ENCODE measurements at regions of chr6 and their contacts with region 1.

Region 1: DNA sequence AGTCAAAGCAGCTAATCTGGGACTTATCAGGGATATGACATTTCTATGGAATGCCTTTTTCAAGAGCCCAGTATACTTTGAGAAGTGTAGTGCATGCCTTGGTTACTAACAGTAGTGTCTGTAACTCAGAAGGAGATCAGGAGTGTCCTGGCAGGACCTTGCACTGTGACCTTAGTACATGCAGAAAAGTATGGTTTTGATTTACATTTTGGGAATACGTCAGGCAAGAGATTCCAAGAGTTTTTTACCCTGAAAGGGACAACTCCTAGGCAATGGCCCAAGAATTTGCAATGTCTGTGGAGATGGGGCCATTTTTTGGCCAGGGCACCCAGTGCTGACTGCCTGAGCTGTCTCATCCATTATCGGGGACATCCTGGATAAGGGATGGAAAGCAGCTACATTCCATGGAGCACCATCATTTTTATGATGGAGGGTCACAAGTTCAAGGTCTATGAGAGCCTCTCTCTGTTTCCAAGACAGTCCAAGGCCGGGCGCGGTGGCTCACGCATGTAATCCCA is 80.2 kb downstream of the FAM50B start:
- DNase-seq: no peak
- H3K4me3 ChIP-seq: no peak overlapping the region
- H3K4me3 Mint-ChIP-seq: no peak overlapping the region
- H3K27ac ChIP-seq: no peak overlapping the region
- H3K27ac Mint-ChIP-seq: no peak overlapping the region
- H3K4me1 ChIP-seq: no peaks in the 10 kb centered on the region
- H3K4me1 Mint-ChIP-seq: no peaks in the 10 kb centered on the region
- H3K27me3 ChIP-seq: no peaks in the 10 kb centered on the region
- H3K27me3 Mint-ChIP-seq: no peaks in the 10 kb centered on the region

Region 2: DNA sequence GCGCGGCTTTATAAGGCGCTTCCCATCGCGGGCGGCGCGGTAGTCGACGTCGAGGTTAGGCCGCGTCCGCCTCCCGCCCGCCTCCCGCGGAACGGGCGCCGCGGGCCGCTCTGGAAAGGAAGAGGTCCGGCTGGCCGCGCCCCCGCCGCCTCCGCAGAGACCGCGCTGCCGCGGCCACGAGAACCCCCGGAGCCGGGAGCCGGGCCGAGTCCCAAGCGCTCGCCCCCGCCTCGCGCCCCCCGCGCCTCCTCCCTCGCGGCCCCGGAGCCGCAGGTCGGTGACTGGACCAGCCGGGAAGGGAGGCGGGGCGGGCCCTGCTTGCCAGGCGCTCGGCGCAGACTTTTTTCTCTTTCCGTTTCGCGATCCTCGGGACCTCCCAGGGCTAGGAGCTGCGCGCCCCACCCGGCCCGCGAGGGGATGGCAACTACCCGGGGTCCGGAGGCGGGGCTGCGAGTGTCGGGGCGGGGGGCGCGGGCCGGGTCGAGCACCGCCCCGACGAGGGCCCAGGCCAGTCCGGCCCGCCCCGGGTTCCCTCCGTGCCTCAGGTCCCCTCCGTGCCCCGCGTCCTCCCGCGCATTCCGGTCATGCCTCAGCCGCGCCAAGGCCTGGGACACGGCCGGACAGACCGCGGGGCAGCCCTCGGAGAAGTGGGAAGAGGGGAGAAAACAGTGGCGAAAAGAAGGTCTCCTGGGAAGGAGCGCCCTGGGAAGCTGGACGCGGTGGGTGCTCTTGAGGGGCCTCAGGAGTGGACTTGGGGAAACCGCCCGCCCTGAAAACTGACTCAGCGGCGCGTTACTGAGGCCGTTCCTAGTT is 177.4 kb before region 1 on chr6:
- CTCF ChIA-PET with region 1: interaction called, 14 read pairs
- POLR2A ChIA-PET with region 1: no interaction called
- intact Hi-C with region 1: loop called (anchors 1 kb)
- DNase-seq: peak; percentile 46 to 78 (median 51)
- H3K4me3 ChIP-seq: peak overlapping the region in 1 of 2 donors; percentile 38
- H3K4me3 Mint-ChIP-seq: peak overlapping the region in 7 of 8 donors; percentile 21 to 73 (median 57)
- H3K27ac ChIP-seq: no peak overlapping the region
- H3K27ac Mint-ChIP-seq: no peak overlapping the region
- H3K4me1 ChIP-seq: peaks cover 11% of the 10 kb centered on the region
- H3K4me1 Mint-ChIP-seq: peaks cover 0 to 27% (median 3%) of the 10 kb centered on the region in 4 donors
- H3K27me3 ChIP-seq: no peaks in the 10 kb centered on the region
- H3K27me3 Mint-ChIP-seq: peaks cover 20 to 23% of the 10 kb centered on the region in 2 donors

Region 3: GRCh38 chr6:3913077-3913957 is 16.0 kb before region 1 on chr6:
- CTCF ChIA-PET with region 1: interaction called, 17 read pairs
- POLR2A ChIA-PET with region 1: no interaction called
- intact Hi-C with region 1: no loop called
- DNase-seq: no peak
- H3K4me3 ChIP-seq: no peak overlapping the region
- H3K4me3 Mint-ChIP-seq: peak overlapping the region in 1 of 8 donors; percentile 15
- H3K27ac ChIP-seq: no peak overlapping the region
- H3K27ac Mint-ChIP-seq: no peak overlapping the region
- H3K4me1 ChIP-seq: peaks cover 43% of the 10 kb centered on the region
- H3K4me1 Mint-ChIP-seq: peaks cover 29 to 56% (median 43%) of the 10 kb centered on the region in 4 donors
- H3K27me3 ChIP-seq: no peaks in the 10 kb centered on the region
- H3K27me3 Mint-ChIP-seq: peaks cover 2 to 16% of the 10 kb centered on the region in 2 donors

Region 4: DNA sequence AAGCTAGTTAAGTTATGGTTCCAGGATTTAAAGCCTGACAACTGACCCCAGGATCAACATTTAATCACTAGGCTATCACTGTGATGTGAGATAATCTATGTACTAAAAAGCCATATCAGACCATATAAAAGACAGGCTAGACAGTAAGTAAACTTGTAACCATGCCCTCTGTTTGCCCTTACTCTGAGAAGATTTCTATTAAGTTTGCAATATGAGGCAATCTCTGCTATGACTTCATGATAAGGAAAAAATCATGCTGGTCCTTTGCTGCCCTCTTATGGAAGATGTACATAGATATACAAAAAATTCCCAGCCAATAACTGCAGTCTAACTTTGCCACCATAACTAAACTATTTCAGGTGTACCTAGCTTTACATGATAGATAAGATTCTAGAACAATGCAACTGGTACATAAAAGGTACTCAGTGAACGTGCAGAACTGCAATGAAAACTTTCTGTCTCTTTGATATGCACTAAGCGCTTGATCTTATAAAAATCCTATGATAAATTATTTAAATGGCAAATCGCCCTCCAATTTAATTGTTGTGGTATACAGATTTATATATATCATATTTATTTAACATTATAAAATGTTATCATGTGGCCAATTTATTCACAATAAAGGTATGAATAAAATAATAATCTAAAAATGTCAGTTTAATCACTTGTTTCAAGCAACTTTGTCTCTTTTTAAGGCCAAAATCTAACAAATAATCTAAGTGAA is 79.1 kb after region 1 on chr6:
- CTCF ChIA-PET with region 1: interaction called, 11 read pairs
- POLR2A ChIA-PET with region 1: no interaction called
- intact Hi-C with region 1: loop called (anchors 2 kb)
- DNase-seq: peak in 4 of 5 donors; percentile 57 to 62 (median 58)
- H3K4me3 ChIP-seq: no peak overlapping the region
- H3K4me3 Mint-ChIP-seq: no peak overlapping the region
- H3K27ac ChIP-seq: no peak overlapping the region
- H3K27ac Mint-ChIP-seq: peak overlapping the region in 5 of 7 donors; percentile 18 to 87 (median 37)
- H3K4me1 ChIP-seq: peaks cover 47% of the 10 kb centered on the region
- H3K4me1 Mint-ChIP-seq: peaks cover 46 to 62% (median 54%) of the 10 kb centered on the region in 4 donors
- H3K27me3 ChIP-seq: no peaks in the 10 kb centered on the region
- H3K27me3 Mint-ChIP-seq: no peaks in the 10 kb centered on the region

Region 5: DNA sequence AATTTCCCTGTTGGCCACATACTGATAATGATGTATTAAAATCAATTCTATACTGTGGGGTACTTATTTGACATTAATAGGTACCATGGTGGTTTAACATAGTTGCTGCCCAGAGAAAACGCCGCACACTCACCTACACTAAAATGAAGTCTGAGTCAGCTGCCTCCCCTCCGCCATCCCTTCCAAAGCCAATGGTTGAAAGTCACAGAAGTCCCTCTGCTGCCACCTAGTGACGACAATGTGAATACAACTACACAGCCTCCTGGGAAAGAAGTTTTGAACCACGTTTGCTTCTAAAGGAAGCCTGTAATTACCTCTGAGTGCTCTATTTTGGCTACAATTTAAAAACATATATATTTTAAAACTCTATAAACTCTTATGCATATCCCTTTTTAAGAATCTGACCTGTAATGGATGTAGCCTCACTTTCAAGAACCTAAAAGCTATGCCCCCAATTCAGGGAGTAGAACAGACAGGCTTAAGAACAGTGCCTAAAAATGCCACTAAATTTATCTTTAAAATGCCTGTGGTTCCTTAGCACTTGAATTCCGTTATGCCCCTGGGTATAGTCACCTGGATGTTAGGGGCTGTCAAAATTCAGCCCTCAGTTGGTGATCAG is 226.6 kb after region 1 on chr6:
- CTCF ChIA-PET with region 1: interaction called, 7 read pairs
- POLR2A ChIA-PET with region 1: no interaction called
- intact Hi-C with region 1: loop called (anchors 2 kb)
- DNase-seq: peak; percentile 69 to 81 (median 73)
- H3K4me3 ChIP-seq: no peak overlapping the region
- H3K4me3 Mint-ChIP-seq: no peak overlapping the region
- H3K27ac ChIP-seq: no peak overlapping the region
- H3K27ac Mint-ChIP-seq: peak overlapping the region in 1 of 7 donors; percentile 25
- H3K4me1 ChIP-seq: no peaks in the 10 kb centered on the region
- H3K4me1 Mint-ChIP-seq: peaks cover 0 to 5% (median 2%) of the 10 kb centered on the region in 4 donors
- H3K27me3 ChIP-seq: no peaks in the 10 kb centered on the region
- H3K27me3 Mint-ChIP-seq: peaks cover 2 to 4% of the 10 kb centered on the region in 2 donors

Measured in CD4-positive, alpha-beta memory T cell (primary cell).